Activated CD4-positive, alpha-beta T cell treated with anti-CD3 and anti-CD28 coated beads, Interleukin-2, amount 10 ng/mL, durations not matched to agents 24 days and 14 days (primary cell): ENCODE measurements at regions of chr6 and their contacts with region 1.

Region 1: GRCh38 chr6:30304002-30304401 is 22.7 kb upstream of the TRIM39 start:
- DNase-seq: no peak
- H3K4me3 Mint-ChIP-seq: no peak overlapping the region
- H3K27ac Mint-ChIP-seq: peak overlapping the region; percentile 46
- H3K4me1 Mint-ChIP-seq: peaks cover 20% of the 10 kb centered on the region
- H3K27me3 Mint-ChIP-seq: no peaks in the 10 kb centered on the region

Region 2: DNA sequence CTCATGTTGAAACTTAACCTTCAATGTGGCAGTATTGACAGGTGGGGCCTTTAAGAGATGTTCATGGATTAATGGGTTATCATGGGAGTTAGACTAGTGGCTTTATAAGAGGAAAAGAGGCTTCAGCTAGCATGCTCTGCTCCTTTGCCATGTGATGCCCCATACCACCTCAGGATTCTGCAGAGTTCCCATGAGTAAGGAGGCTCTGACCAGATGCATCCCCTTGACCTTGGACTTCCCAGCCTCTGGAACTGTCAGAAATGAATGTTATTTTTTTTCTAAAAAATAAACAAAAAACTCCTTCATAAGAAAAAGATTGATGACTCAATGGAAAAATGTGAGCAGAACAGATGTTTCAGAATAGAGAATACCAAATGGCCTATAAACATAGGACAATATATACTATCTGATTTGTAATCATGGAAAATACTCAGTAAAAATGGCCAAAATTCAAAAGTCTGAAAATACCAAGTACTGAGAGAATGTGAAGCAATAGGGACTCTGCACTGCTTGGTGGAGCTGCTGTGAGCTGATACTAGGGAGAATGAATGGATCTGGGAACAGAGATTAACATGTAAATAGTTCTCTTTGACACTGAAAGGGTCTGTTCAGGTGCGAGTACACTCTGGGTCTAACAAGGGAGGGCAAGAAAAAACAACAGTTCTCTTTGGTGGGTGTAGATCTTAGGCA is 15.3 kb after region 1 on chr6:
- intact Hi-C with region 1: loop called (anchors 2 kb)
- DNase-seq: no peak
- H3K4me3 Mint-ChIP-seq: no peak overlapping the region
- H3K27ac Mint-ChIP-seq: peak overlapping the region; percentile 34
- H3K4me1 Mint-ChIP-seq: peaks cover 58% of the 10 kb centered on the region
- H3K27me3 Mint-ChIP-seq: no peaks in the 10 kb centered on the region